ENCODE measurements at regions of chr4 and their contacts with region 1.

Region 1: DNA sequence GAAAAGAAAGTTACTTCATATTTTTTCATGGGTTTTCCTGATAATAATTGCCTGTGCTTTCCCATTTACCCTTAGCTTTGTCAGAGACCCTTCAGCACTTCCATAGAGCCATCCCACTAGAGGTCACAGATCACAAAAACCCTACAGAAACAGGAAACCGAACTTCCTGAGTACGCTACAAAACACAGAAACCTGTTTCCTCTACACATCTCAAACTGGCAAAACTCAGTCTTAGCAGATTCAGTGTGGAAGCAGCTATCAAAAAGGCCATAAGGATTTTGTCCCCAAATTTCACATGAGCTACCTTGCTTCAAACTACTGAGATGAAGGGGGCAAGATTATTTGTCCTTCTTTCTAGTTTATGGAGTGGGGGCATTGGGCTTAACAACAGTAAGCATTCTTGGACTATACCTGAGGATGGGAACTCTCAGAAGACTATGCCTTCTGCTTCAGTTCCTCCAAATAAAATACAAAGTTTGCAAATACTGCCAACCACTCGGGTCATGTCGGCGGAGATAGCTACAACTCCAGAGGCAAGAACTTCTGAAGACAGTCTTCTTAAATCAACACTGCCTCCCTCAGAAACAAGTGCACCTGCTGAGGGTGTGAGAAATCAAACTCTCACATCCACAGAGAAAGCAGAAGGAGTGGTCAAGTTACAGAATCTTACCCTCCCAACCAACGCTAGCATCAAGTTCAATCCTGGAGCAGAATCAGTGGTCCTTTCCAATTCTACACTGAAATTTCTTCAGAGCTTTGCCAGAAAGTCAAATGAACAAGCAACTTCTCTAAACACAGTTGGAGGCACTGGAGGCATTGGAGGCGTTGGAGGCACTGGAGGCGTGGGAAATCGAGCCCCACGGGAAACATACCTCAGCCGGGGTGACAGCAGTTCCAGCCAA is at the start of gene MMRN1:
- DNase-seq: no peak
- ATAC-seq: no peak
- H3K4me3 ChIP-seq: no peak within 1 kb of the TSS
- H3K27ac ChIP-seq: no peak within 1 kb of the TSS
- H3K4me1 ChIP-seq: peaks cover 0 to 15% (median 0%) of the 10 kb centered on the region in 9 donors
- H3K27me3 ChIP-seq: peaks cover 0 to 4% (median 0%) of the 10 kb centered on the region in 7 donors
- CTCF ChIP-seq: no peak
- total RNA-seq, gene MMRN1: 0.20 to 3.9 (median 2.3) TPM

Region 2: DNA sequence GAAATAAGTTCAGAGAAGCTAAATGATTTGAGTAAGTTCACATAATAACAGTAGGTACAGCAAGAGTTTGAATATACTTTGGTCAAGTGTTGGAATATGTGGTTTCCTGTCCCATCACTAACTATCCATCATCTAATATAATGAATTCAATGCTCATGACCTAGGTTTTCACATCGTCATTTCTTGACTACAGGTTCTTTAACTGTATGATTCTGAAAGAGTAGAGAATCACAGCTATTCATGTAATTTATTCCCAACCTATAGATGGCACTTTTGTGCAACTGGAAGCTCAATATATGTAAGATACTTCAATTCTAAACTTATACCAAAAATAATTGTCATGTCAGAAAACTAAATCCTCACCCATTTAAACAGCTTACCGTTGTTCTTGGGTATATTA is 730.5 kb before region 1 on chr4:
- intact Hi-C with region 1: loop called in 3 of 10 experiments (anchors 5 to 10 kb)
- DNase-seq: no peak
- ATAC-seq: no peak
- H3K4me3 ChIP-seq: no peak overlapping the region
- H3K27ac ChIP-seq: no peak overlapping the region
- H3K4me1 ChIP-seq: no peaks in the 10 kb centered on the region
- H3K27me3 ChIP-seq: no peaks in the 10 kb centered on the region
- CTCF ChIP-seq: no peak

Region 3: GRCh38 chr4:89226665-89227574 is 668.0 kb before region 1 on chr4:
- intact Hi-C with region 1: loop called in 4 of 10 experiments (anchors 5 to 10 kb)
- DNase-seq: peak; percentile 26 to 87
- ATAC-seq: peak; percentile 84 to 98 (median 94)
- H3K4me3 ChIP-seq: no peak overlapping the region
- H3K27ac ChIP-seq: no peak overlapping the region
- H3K4me1 ChIP-seq: no peaks in the 10 kb centered on the region
- H3K27me3 ChIP-seq: no peaks in the 10 kb centered on the region
- CTCF ChIP-seq: peak; percentile 30 to 83 (median 78)

Region 4: DNA sequence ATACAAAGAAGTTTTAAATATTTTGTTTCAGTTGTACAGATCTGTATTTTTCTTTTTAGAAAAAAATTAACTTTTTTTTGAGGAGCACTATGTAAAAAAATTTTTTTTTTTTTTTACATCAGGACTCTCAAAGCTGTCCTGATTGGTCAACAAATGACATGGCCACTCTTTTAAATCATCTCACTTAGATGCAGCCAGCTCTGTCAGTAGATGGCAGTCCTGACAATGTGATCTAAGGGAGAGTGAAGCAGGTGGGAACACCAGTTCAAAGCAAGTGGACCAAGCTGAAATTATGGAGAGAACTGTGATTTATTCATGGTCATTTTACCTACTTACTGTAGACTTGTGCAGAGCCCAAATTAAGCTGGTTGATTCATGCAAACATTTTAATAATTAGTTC is 412.7 kb before region 1 on chr4:
- intact Hi-C with region 1: loop called in 2 of 10 experiments (anchors 5 to 10 kb)
- DNase-seq: no peak
- ATAC-seq: peak in 2 of 8 donors; percentile 51 to 63
- H3K4me3 ChIP-seq: no peak overlapping the region
- H3K27ac ChIP-seq: no peak overlapping the region
- H3K4me1 ChIP-seq: no peaks in the 10 kb centered on the region
- H3K27me3 ChIP-seq: no peaks in the 10 kb centered on the region
- CTCF ChIP-seq: peak in 5 of 9 donors; percentile 11 to 39 (median 36)

Region 5: GRCh38 chr4:89657931-89658700 is 236.8 kb before region 1 on chr4:
- intact Hi-C with region 1: loop called in 3 of 10 experiments (anchors 10 kb)
- DNase-seq: no peak
- ATAC-seq: no peak
- H3K4me3 ChIP-seq: no peak overlapping the region
- H3K27ac ChIP-seq: no peak overlapping the region
- H3K4me1 ChIP-seq: peaks cover 0 to 5% (median 0%) of the 10 kb centered on the region in 9 donors
- H3K27me3 ChIP-seq: no peaks in the 10 kb centered on the region
- CTCF ChIP-seq: peak in 7 of 9 donors; percentile 15 to 61 (median 50)

Region 6: GRCh38 chr4:89860971-89861370 is 33.9 kb before region 1 on chr4:
- intact Hi-C with region 1: no loop called
- DNase-seq: no peak
- ATAC-seq: no peak
- H3K4me3 ChIP-seq: no peak overlapping the region
- H3K27ac ChIP-seq: no peak overlapping the region
- H3K4me1 ChIP-seq: no peaks in the 10 kb centered on the region
- H3K27me3 ChIP-seq: no peaks in the 10 kb centered on the region
- CTCF ChIP-seq: no peak